ENCODE measurements at regions of chr1 and their contacts with region 1.

Region 1: GRCh38 chr1:100443811-100444571 is 91.7 kb downstream of the CDC14A start:
- DNase-seq: peak; percentile 65
- H3K4me3 Mint-ChIP-seq: peak overlapping the region; percentile 82
- H3K27ac Mint-ChIP-seq: peak overlapping the region; percentile 98
- H3K4me1 Mint-ChIP-seq: peaks cover 84% of the 10 kb centered on the region
- H3K27me3 Mint-ChIP-seq: no peaks in the 10 kb centered on the region

Region 2: DNA sequence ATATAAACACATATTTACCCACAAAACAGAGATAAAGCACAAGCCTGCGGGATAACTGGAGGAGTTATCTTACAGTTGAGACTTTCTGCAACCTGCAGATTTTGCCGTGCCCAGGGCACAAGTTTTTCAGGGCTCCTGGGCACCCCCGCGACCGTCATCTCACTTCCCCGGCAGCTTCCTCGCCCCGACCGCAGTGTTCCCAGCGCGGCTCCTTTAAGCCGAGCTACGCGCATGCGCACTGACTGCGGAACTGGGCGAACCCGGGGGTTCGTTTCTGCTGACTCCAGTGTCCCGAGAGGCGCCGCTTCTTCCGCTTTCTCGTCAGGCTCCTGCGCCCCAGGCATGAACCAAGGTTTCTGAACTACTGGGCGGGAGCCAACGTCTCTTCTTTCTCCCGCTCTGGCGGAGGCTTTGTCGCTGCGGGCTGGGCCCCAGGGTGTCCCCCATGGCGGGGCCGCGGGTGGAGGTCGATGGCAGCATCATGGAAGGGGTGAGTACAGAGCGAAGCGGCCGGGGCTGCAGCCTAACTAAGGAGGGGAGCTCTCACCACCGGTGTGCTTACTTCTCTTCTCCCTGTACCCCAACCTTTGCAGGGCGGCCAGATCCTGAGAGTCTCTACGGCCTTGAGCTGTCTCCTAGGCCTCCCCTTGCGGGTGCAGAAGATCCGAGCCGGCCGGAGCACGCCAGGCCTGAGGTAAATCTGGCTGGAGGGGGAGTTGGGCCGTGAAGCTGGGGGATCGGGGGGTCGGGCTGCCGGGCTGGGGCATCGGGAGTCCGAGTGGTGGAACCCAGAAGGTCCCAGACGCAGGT is 177.9 kb before region 1 on chr1 and contains the start of gene RTCA:
- CTCF ChIA-PET with region 1: no interaction called
- POLR2A ChIA-PET with region 1: interaction called, 3 read pairs
- intact Hi-C with region 1: loop called (anchors 5 kb)
- DNase-seq: peak; percentile 96
- H3K4me3 Mint-ChIP-seq: peak within 1 kb of the TSS; percentile 100
- H3K27ac Mint-ChIP-seq: peak within 1 kb of the TSS; percentile 97
- H3K4me1 Mint-ChIP-seq: peaks cover 40% of the 10 kb centered on the region
- H3K27me3 Mint-ChIP-seq: no peaks in the 10 kb centered on the region
- total RNA-seq, gene RTCA: 56.6 to 58.2 TPM

Region 3: DNA sequence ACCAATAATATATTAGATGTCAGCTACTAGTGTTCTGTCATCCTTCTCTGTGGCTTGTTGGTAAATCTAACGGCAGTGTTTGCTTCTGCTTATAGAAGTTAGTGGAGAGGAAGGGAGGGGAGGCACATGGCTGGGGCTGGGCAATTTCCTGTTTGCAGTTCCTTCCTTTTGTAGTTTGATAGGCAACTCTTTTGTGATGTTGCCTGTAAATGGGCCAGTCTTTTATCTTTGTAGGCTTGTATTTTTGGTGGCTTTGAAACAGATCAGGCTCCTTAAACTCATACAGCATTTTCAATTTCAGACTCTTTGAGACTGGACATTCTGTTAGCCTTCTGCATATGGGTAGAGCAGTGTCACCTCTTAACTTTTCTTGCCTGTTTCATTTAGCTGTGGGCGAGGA is 43.6 kb before region 1 on chr1:
- CTCF ChIA-PET with region 1: interaction called, 5 read pairs
- POLR2A ChIA-PET with region 1: interaction called, 4 read pairs
- intact Hi-C with region 1: loop called (anchors 1 kb)
- DNase-seq: peak; percentile 67
- H3K4me3 Mint-ChIP-seq: peak overlapping the region; percentile 53
- H3K27ac Mint-ChIP-seq: peak overlapping the region; percentile 91
- H3K4me1 Mint-ChIP-seq: peaks cover 83% of the 10 kb centered on the region
- H3K27me3 Mint-ChIP-seq: no peaks in the 10 kb centered on the region

Region 4: DNA sequence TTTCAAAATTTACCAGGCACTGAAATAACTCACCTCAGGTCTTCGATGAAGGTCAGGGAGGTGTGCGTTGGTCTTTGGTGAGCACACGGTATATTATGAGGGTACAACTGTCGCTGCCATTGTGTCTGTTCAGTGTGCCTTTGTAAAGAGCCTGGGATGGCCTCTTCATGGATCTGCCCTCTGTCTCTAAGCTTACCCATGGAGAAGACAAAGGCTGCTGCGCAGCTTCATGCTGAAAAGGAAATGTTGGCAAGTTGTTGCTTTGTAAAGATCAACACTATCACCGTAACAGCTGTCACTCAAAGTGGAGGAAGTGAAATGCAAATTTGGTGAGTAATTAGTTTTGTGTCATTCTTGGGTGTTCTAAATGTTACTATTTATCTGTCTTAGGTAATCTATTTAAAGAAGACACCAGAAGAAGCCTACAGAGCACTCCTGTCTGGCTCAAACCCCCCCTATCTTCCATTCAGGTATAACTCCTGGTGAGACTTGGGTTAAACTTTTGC is 20.1 kb before region 1 on chr1:
- CTCF ChIA-PET with region 1: interaction called, 7 read pairs
- POLR2A ChIA-PET with region 1: interaction called, 4 read pairs
- intact Hi-C with region 1: loop called (anchors 1 kb)
- DNase-seq: peak; percentile 33
- H3K4me3 Mint-ChIP-seq: peak overlapping the region; percentile 57
- H3K27ac Mint-ChIP-seq: peak overlapping the region; percentile 76
- H3K4me1 Mint-ChIP-seq: peaks cover 72% of the 10 kb centered on the region
- H3K27me3 Mint-ChIP-seq: no peaks in the 10 kb centered on the region

Region 5: GRCh38 chr1:100631015-100631551 is 187.1 kb after region 1 on chr1:
- CTCF ChIA-PET with region 1: no interaction called
- POLR2A ChIA-PET with region 1: no interaction called
- intact Hi-C with region 1: no loop called
- DNase-seq: no peak
- H3K4me3 Mint-ChIP-seq: no peak overlapping the region
- H3K27ac Mint-ChIP-seq: no peak overlapping the region
- H3K4me1 Mint-ChIP-seq: peaks cover 11% of the 10 kb centered on the region
- H3K27me3 Mint-ChIP-seq: peaks cover 3% of the 10 kb centered on the region

Region 6: DNA sequence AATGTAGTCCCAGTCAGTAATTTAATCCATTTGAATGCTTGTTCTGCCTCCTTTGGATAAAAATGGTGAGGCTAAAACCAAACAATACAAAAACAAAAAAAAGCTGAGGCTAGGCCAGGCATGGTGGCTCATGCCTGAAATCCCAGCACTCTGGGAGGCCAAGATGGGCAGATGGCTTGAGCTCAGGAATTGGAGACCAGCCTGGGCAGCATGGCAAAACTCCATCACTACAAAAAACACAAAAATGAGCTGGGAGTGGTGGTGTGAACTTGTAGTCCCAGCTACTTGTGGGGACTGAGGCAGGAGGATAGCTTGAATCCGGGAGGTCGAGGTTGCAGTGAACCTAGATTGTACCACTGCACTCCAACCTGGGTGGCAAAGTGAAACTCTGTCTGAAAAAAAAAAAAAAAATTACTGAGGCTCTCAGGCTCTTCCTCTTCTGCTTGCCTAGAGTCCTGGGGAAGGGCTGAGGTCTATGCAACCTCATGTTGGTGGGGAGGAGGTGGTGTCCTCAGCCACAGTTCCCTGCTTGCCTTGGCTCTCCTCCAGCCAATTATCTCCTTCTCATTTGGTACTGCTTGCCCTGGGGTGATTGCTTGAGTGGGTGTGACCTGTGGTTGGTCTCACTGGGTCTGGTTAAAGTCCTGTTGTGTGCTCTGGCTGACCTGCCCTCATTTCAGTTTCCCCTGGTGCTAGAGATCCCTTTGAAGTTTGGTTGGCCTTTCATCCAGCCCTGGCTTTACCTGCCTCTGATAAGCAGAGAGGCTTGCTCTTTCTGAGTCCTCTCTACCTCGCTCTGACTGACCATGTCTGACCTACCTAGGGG is 813.7 kb after region 1 on chr1:
- CTCF ChIA-PET with region 1: no interaction called
- POLR2A ChIA-PET with region 1: no interaction called
- intact Hi-C with region 1: loop called (anchors 10 kb)
- DNase-seq: peak; percentile 49
- H3K4me3 Mint-ChIP-seq: no peak overlapping the region
- H3K27ac Mint-ChIP-seq: peak overlapping the region; percentile 67
- H3K4me1 Mint-ChIP-seq: peaks cover 66% of the 10 kb centered on the region
- H3K27me3 Mint-ChIP-seq: no peaks in the 10 kb centered on the region